Calu3 (cell line): ENCODE measurements at regions of chr5 and their contacts with region 1.

Region 1: DNA sequence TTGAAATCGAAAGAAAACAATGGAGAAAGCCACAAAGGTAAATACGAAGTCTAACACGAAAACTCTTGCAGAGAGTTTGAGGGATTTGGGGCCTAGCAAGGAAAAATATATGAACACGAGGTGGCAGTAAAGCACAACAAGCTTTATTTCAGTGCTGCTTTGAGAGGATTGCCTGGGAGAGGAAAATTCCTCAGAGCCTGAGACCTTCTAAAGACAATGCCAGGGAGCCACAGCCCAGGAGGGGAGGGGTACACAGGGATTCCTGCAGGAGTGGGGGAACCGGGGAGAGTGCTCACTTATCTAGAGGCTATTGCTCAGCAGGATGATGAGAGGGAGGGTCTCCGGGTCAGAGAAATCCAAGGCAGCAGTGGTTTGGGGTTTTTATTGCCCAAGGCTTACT is 134.9 kb upstream of the ADCY2 start:
- DNase-seq: peak; percentile 10
- H3K4me3 Mint-ChIP-seq: no peak overlapping the region
- H3K27ac Mint-ChIP-seq: no peak overlapping the region
- H3K4me1 Mint-ChIP-seq: no peaks in the 10 kb centered on the region
- H3K27me3 Mint-ChIP-seq: no peaks in the 10 kb centered on the region
- CTCF ChIP-seq: peak; percentile 25

Region 2: GRCh38 chr5:7391814-7392692 is 131.0 kb after region 1 on chr5:
- CTCF ChIA-PET with region 1: no interaction called
- intact Hi-C with region 1: loop called (anchors 5 kb)
- DNase-seq: peak; percentile 18
- H3K4me3 Mint-ChIP-seq: no peak overlapping the region
- H3K27ac Mint-ChIP-seq: no peak overlapping the region
- H3K4me1 Mint-ChIP-seq: no peaks in the 10 kb centered on the region
- H3K27me3 Mint-ChIP-seq: peaks cover 9% of the 10 kb centered on the region
- CTCF ChIP-seq: no peak

Region 3: GRCh38 chr5:7745882-7746610 is 485.0 kb after region 1 on chr5:
- CTCF ChIA-PET with region 1: no interaction called
- intact Hi-C with region 1: loop called (anchors 1 kb)
- DNase-seq: peak; percentile 79
- H3K4me3 Mint-ChIP-seq: no peak overlapping the region
- H3K27ac Mint-ChIP-seq: no peak overlapping the region
- H3K4me1 Mint-ChIP-seq: no peaks in the 10 kb centered on the region
- H3K27me3 Mint-ChIP-seq: peaks cover 47% of the 10 kb centered on the region
- CTCF ChIP-seq: peak; percentile 67

Region 4: DNA sequence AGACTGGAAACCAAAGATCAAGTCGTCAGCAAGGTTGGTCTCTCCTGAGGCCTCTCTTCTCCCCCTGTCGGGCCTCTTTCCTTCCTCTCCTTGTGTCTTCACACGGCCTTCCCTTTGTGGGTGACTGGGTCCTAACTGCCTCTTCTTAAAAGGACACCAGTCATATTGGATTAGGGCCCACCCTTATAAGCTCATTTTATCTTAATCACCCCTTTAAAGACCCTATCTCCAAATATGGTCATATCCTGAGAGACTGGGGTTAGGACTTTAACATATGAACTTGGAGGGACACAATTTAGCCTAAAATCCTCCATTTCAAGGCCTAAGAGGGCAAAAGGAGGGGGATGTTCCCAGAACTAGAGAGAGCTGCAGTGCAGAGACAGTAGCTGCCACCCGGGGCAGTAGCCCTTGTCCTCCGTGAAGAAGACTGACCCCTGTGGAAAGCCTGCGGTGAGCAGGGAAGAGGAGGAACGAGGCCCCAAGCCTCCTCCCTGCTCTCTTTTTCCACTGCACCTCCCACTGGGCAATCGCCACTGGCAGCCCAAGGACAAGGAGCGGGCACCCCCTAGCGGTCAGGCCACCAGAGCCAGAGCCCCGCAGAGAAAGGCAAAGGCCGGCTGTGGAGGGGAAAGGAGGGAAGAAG is 555.0 kb after region 1 on chr5:
- CTCF ChIA-PET with region 1: no interaction called
- intact Hi-C with region 1: loop called (anchors 2 kb)
- DNase-seq: peak; percentile 90
- H3K4me3 Mint-ChIP-seq: no peak overlapping the region
- H3K27ac Mint-ChIP-seq: no peak overlapping the region
- H3K4me1 Mint-ChIP-seq: no peaks in the 10 kb centered on the region
- H3K27me3 Mint-ChIP-seq: peaks cover 71% of the 10 kb centered on the region
- CTCF ChIP-seq: peak; percentile 86

Region 5: GRCh38 chr5:7856855-7857254 is 595.8 kb after region 1 on chr5:
- CTCF ChIA-PET with region 1: no interaction called
- intact Hi-C with region 1: loop called (anchors 2 kb)
- DNase-seq: peak; percentile 24
- H3K4me3 Mint-ChIP-seq: no peak overlapping the region
- H3K27ac Mint-ChIP-seq: no peak overlapping the region
- H3K4me1 Mint-ChIP-seq: no peaks in the 10 kb centered on the region
- H3K27me3 Mint-ChIP-seq: no peaks in the 10 kb centered on the region
- CTCF ChIP-seq: no peak